MCF 10A (cell line): ENCODE measurements at regions of chr1 and their contacts with region 1.

Region 1: GRCh38 chr1:219385786-219386427 is 212.2 kb downstream of the LYPLAL1 start:
- DNase-seq: peak; percentile 87
- H3K4me3 Mint-ChIP-seq: no peak overlapping the region
- H3K27ac Mint-ChIP-seq: no peak overlapping the region
- H3K4me1 Mint-ChIP-seq: no peaks in the 10 kb centered on the region
- H3K27me3 Mint-ChIP-seq: peaks cover 63% of the 10 kb centered on the region
- CTCF ChIP-seq: peak; percentile 96

Region 2: GRCh38 chr1:218330043-218330623 is 1055.8 kb before region 1 on chr1:
- CTCF ChIA-PET with region 1: interaction called, 40 read pairs
- POLR2A ChIA-PET with region 1: no interaction called
- intact Hi-C with region 1: loop called (anchors 1 kb)
- DNase-seq: peak; percentile 67
- H3K4me3 Mint-ChIP-seq: no peak overlapping the region
- H3K27ac Mint-ChIP-seq: peak overlapping the region; percentile 55
- H3K4me1 Mint-ChIP-seq: no peaks in the 10 kb centered on the region
- H3K27me3 Mint-ChIP-seq: no peaks in the 10 kb centered on the region
- CTCF ChIP-seq: peak; percentile 84

Region 3: DNA sequence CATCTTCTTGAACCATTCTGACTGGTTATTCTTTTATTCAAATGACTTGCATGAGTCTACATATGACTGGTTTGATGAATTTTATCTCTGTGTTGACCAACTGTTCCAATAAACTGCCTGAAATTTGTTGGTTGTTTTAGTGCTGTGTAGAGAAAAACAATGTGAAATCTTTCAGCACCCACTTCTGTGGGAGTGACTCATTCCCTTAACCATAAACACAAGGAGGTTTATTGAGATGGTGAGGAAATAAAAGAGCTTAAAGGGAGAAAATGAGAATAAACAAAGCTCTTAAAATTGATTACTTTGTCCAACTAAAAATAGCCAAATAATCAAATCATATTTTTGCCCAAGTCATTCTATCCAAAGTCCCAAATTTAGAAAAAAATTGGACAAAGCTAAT is 699.6 kb before region 1 on chr1:
- CTCF ChIA-PET with region 1: no interaction called
- POLR2A ChIA-PET with region 1: no interaction called
- intact Hi-C with region 1: loop called (anchors 10 kb)
- DNase-seq: peak; percentile 60
- H3K4me3 Mint-ChIP-seq: no peak overlapping the region
- H3K27ac Mint-ChIP-seq: peak overlapping the region; percentile 17
- H3K4me1 Mint-ChIP-seq: no peaks in the 10 kb centered on the region
- H3K27me3 Mint-ChIP-seq: no peaks in the 10 kb centered on the region
- CTCF ChIP-seq: no peak

Region 4: DNA sequence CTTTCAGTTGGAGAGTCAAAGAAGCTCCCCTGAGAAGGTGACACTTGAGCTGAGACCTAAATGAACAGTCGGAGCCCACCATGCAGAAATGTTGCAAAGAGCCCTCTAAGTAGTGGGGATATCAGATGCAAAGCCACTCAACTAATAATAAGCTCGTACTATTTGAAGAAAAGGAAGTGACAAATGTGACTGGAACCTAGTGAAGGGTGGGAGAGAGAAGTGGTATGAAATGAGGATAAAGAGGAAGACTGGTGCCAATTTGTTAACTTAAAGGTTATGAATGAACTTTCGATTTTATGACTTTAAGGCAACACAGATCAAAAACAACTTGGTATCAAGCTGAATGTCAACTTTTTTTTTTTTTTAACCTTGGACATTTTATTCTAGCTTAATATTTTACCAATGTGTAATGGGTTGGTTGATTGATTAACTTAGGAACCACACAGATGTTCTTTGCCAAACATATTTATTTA is 197.5 kb before region 1 on chr1:
- CTCF ChIA-PET with region 1: no interaction called
- POLR2A ChIA-PET with region 1: no interaction called
- intact Hi-C with region 1: no loop called
- DNase-seq: no peak
- H3K4me3 Mint-ChIP-seq: no peak overlapping the region
- H3K27ac Mint-ChIP-seq: peak overlapping the region; percentile 43
- H3K4me1 Mint-ChIP-seq: peaks cover 22% of the 10 kb centered on the region
- H3K27me3 Mint-ChIP-seq: no peaks in the 10 kb centered on the region
- CTCF ChIP-seq: no peak

Region 5: DNA sequence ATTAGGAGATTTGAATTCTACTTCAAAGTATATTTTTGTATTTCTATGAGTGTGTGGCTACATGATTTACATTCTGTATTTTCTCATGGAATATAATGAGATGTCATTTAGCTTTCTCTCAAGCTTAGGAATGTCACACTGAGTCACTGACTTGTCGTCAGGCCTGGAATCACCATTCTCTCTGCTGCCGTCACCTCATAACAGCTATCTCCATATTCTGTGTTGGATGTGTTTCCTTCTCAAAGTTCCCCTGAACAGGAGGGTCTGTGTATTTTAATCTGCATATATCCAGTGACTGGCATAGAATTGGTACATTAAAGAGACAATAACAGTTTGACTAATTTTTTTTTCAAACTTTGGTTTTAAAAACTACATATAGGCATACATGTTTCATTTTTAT is 176.3 kb before region 1 on chr1:
- CTCF ChIA-PET with region 1: interaction called, 13 read pairs
- POLR2A ChIA-PET with region 1: no interaction called
- intact Hi-C with region 1: loop called (anchors 1 kb)
- DNase-seq: no peak
- H3K4me3 Mint-ChIP-seq: no peak overlapping the region
- H3K27ac Mint-ChIP-seq: no peak overlapping the region
- H3K4me1 Mint-ChIP-seq: no peaks in the 10 kb centered on the region
- H3K27me3 Mint-ChIP-seq: no peaks in the 10 kb centered on the region
- CTCF ChIP-seq: no peak

Region 6: GRCh38 chr1:219352961-219353651 is 32.8 kb before region 1 on chr1:
- CTCF ChIA-PET with region 1: interaction called, 16 read pairs
- POLR2A ChIA-PET with region 1: interaction called, 3 read pairs
- intact Hi-C with region 1: no loop called
- DNase-seq: no peak
- H3K4me3 Mint-ChIP-seq: no peak overlapping the region
- H3K27ac Mint-ChIP-seq: no peak overlapping the region
- H3K4me1 Mint-ChIP-seq: no peaks in the 10 kb centered on the region
- H3K27me3 Mint-ChIP-seq: peaks cover 83% of the 10 kb centered on the region
- CTCF ChIP-seq: no peak

Region 7: GRCh38 chr1:219427403-219427802 is 41.5 kb after region 1 on chr1:
- CTCF ChIA-PET with region 1: interaction called, 16 read pairs
- POLR2A ChIA-PET with region 1: interaction called, 3 read pairs
- intact Hi-C with region 1: no loop called
- DNase-seq: no peak
- H3K4me3 Mint-ChIP-seq: no peak overlapping the region
- H3K27ac Mint-ChIP-seq: no peak overlapping the region
- H3K4me1 Mint-ChIP-seq: no peaks in the 10 kb centered on the region
- H3K27me3 Mint-ChIP-seq: peaks cover 51% of the 10 kb centered on the region
- CTCF ChIP-seq: no peak

Region 8: DNA sequence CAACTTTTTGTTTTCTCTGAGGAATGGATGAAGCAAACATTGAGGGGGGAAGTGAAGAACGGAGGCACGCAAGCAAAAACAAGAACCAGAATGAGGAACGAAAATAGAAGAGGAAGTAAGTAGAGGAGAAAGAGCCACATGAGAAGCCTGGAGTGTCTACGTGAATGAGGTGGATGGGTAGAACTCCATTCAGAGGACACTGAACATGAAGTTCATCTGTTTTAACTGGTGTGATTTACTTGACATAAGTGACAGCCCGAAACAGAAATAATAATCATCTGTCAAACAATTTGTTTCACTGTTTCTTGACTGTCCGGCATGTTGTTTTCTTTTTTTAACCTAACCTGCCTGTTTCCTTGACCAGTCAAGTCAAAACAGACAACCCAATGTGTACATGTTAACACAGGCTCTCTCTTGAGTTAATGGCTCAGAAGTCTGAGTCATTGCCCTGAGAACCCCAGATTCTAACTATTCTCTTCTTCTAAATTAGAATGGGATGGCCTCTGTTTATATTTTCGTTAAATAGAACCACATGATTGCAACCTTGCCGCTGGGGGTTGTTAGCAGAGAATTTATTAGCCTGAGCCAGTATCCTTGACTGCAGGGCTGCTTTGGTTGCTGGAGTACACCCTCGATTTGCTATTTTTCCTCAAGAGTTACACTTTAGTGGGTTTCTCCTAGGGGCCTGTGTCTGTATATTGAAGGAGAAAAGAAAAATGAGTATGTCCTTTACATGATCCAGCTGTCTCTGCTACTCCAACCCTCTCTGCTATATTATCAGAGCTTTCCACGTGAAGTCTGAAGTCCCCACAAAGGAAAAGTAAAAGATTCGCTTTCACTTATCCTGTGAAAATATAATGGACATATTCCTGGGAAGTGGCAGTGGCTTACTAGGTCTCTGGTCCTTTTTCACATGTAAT is 75.2 kb after region 1 on chr1:
- CTCF ChIA-PET with region 1: no interaction called
- POLR2A ChIA-PET with region 1: no interaction called
- intact Hi-C with region 1: no loop called
- DNase-seq: peak; percentile 60
- H3K4me3 Mint-ChIP-seq: no peak overlapping the region
- H3K27ac Mint-ChIP-seq: no peak overlapping the region
- H3K4me1 Mint-ChIP-seq: no peaks in the 10 kb centered on the region
- H3K27me3 Mint-ChIP-seq: peaks cover 61% of the 10 kb centered on the region
- CTCF ChIP-seq: no peak

Region 9: DNA sequence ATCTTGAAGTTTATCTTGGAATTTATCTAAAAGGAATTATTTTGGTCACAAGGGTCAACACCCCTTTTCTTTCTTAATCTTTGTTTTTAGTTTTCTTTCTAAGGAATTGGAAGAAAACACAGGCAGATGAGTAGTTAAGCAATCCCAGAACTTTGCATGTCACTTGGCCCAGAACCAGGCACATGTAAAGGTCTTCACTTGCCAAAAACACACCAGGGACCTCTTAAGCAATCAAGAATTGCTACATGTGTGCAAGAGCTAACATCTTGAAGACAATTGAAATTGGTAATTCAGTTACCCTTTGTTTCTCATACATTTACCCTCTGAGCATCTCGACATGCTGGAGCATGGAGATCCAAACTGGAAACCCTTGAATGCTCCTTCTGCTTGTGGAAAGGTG is 112.8 kb after region 1 on chr1:
- CTCF ChIA-PET with region 1: no interaction called
- POLR2A ChIA-PET with region 1: no interaction called
- intact Hi-C with region 1: no loop called
- DNase-seq: peak; percentile 96
- H3K4me3 Mint-ChIP-seq: no peak overlapping the region
- H3K27ac Mint-ChIP-seq: no peak overlapping the region
- H3K4me1 Mint-ChIP-seq: no peaks in the 10 kb centered on the region
- H3K27me3 Mint-ChIP-seq: peaks cover 73% of the 10 kb centered on the region
- CTCF ChIP-seq: no peak

Region 10: DNA sequence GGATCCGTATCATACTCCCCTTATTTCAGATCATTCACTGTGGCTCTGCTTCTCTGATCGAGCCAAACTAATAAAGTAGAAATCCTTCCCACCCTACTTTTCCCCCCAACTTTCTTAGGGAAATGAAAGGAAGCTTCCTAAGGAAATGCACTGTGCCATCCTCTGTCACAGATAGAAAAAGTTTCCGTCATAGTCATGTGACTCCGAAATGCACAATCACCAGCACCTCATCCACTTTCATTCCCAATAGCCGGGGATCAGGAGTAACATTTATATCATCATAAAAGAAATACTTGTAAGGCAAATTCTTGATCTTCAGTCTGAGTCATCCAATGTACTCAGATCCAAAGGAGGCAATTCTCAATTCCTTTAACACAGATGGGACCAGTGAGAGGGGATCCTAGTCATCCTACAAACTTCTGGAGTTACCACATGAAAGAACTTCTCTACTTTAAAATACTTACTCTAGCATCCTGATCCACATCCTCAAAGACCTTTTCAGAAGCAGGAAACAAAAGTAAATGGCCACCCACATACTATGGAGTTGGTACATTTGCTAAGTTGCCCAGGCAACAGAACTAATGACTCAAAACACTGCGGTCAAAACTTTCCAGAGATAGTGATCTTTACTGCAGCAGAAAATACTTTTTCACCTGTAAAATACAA is 324.8 kb after region 1 on chr1:
- CTCF ChIA-PET with region 1: no interaction called
- POLR2A ChIA-PET with region 1: no interaction called
- intact Hi-C with region 1: no loop called
- DNase-seq: peak; percentile 45
- H3K4me3 Mint-ChIP-seq: no peak overlapping the region
- H3K27ac Mint-ChIP-seq: no peak overlapping the region
- H3K4me1 Mint-ChIP-seq: no peaks in the 10 kb centered on the region
- H3K27me3 Mint-ChIP-seq: peaks cover 26% of the 10 kb centered on the region
- CTCF ChIP-seq: no peak